ENCODE measurements at regions of chr10 and their contacts with region 1.

Region 1: GRCh38 chr10:126902157-126902556 is 3.1 kb upstream of the DOCK1 start:
- DNase-seq: peak; percentile 48
- H3K4me3 ChIP-seq: no peak overlapping the region
- H3K27me3 ChIP-seq: no peaks in the 10 kb centered on the region
- CTCF ChIP-seq: peak; percentile 56

Region 2: GRCh38 chr10:126252884-126253618 is 649.1 kb before region 1 on chr10:
- CTCF ChIA-PET with region 1: no interaction called
- POLR2A ChIA-PET with region 1: interaction called, 10 read pairs
- DNase-seq: peak; percentile 99
- H3K4me3 ChIP-seq: no peak overlapping the region
- H3K27me3 ChIP-seq: no peaks in the 10 kb centered on the region
- CTCF ChIP-seq: no peak